Activated CD4-positive, alpha-beta memory T cell treated with anti-CD3 and anti-CD28 coated beads, Interleukin-2, amount 10 ng/mL, durations not matched to agents 7 days and 5 days (primary cell): ENCODE measurements at regions of chr13 and their contacts with region 1.

Region 1: DNA sequence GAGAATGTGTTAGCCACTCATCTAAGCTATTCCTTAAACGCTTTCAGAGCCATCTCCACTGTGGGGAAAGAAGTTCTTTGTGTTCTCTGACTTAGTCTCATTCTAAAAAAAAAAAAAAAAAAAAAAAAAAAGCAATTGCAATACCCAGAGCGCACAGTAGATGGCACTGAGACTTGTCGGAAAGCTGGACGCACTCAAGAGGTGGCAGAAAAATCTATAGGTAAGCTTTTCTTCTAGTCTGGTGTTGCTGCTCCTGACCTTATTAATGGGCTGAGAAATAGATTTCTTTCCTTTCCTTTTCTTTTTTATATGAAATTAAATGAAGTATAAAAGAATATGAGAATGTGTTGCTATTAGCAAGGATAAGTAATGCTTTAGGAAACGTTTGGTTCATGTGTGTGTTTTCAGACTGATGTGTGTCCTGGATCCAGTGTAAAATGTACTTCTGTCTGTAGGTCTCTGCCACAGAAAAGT is 4.7 kb upstream of the GJB2 start:
- DNase-seq: no peak
- H3K4me3 Mint-ChIP-seq: no peak overlapping the region
- H3K27ac Mint-ChIP-seq: no peak overlapping the region
- H3K4me1 Mint-ChIP-seq: peaks cover 22% of the 10 kb centered on the region
- H3K27me3 Mint-ChIP-seq: peaks cover 49% of the 10 kb centered on the region

Region 2: GRCh38 chr13:20043207-20043925 is 154.0 kb before region 1 on chr13:
- CTCF ChIA-PET with region 1: no interaction called
- POLR2A ChIA-PET with region 1: no interaction called
- DNase-seq: no peak
- H3K4me3 Mint-ChIP-seq: no peak overlapping the region
- H3K27ac Mint-ChIP-seq: no peak overlapping the region
- H3K4me1 Mint-ChIP-seq: peaks cover under 1% of the 10 kb centered on the region
- H3K27me3 Mint-ChIP-seq: no peaks in the 10 kb centered on the region

Region 3: GRCh38 chr13:20127577-20128466 is 69.6 kb before region 1 on chr13:
- CTCF ChIA-PET with region 1: interaction called, 10 read pairs
- POLR2A ChIA-PET with region 1: no interaction called
- DNase-seq: peak; percentile 57
- H3K4me3 Mint-ChIP-seq: peak overlapping the region; percentile 63
- H3K27ac Mint-ChIP-seq: no peak overlapping the region
- H3K4me1 Mint-ChIP-seq: peaks cover 8% of the 10 kb centered on the region
- H3K27me3 Mint-ChIP-seq: peaks cover 43% of the 10 kb centered on the region

Region 4: DNA sequence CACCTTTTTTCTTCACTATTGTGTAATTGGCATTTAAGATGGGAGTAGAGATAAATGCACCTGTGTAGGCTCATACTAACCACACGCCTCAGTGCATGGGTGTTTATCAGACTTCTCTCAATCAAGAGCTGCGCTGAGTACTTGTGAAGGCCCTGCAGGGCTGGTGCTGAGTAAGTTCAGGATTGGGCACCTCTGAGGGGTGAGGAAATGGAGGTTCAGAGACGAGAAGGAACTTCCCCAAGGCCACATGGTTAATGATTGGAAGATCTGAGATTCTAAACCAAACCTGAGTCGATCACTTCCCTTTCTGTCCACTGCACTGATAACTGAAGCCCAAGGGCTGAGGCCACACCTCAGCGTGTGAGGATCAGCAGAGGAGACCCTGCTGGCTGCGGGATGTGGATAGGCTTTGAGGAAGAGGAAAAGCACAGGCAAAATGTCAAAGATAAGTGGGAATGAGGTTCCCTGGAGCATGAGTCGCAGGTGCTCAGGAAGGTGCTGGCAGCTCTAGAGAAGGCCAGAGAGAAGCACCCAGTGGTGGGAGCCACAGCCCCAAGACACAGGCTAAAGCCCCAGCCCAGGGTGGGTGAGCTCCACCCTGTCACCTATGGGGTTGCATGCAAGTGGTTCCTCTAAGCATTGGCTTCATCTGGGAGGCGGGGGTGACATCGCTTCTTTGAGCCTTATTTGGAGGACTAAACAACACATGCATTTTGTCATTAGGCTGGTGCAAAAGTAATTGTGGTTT is 67.0 kb after region 1 on chr13:
- CTCF ChIA-PET with region 1: no interaction called
- POLR2A ChIA-PET with region 1: no interaction called
- DNase-seq: no peak
- H3K4me3 Mint-ChIP-seq: no peak overlapping the region
- H3K27ac Mint-ChIP-seq: no peak overlapping the region
- H3K4me1 Mint-ChIP-seq: peaks cover 10% of the 10 kb centered on the region
- H3K27me3 Mint-ChIP-seq: peaks cover 4% of the 10 kb centered on the region

Region 5: DNA sequence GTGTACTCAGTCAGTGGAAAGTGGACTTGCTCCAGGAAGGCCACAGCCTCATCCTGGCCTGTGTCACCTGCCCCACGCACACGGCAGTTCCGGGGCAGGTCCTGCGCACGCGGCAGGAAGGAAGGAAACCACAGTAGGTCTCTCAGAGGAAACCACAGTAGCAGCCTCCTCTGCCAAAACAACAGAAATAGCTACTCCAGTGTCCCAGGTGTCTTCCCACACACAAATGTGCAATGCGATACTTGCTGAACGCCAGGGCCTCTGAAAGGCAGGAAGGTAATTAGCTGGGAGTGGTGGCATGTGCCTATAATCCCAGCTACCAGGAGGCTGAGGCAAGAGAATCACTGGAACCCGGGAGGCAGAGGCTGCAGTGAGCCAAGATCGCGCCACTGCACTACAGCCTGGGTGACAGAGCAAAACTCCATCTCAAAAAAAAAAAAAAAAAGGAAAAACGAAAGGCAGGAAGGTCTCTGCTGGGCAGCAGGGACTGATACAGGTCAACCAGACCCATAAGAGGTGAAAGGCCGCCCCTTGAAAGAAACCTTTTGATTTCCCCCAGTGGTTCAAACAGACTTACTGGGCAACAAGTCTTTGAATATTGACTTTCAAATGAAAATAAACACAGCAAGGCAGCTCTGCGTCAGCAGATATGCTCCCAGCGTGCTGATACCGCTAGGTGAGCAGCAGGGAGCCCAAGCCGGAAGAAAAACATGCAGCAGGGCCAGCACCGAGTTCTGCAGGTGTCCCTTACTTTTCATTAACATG is 278.7 kb after region 1 on chr13:
- CTCF ChIA-PET with region 1: interaction called, 16 read pairs
- POLR2A ChIA-PET with region 1: interaction called, 3 read pairs
- DNase-seq: peak; percentile 83
- H3K4me3 Mint-ChIP-seq: peak overlapping the region; percentile 69
- H3K27ac Mint-ChIP-seq: peak overlapping the region; percentile 97
- H3K4me1 Mint-ChIP-seq: peaks cover 36% of the 10 kb centered on the region
- H3K27me3 Mint-ChIP-seq: no peaks in the 10 kb centered on the region

Region 6: DNA sequence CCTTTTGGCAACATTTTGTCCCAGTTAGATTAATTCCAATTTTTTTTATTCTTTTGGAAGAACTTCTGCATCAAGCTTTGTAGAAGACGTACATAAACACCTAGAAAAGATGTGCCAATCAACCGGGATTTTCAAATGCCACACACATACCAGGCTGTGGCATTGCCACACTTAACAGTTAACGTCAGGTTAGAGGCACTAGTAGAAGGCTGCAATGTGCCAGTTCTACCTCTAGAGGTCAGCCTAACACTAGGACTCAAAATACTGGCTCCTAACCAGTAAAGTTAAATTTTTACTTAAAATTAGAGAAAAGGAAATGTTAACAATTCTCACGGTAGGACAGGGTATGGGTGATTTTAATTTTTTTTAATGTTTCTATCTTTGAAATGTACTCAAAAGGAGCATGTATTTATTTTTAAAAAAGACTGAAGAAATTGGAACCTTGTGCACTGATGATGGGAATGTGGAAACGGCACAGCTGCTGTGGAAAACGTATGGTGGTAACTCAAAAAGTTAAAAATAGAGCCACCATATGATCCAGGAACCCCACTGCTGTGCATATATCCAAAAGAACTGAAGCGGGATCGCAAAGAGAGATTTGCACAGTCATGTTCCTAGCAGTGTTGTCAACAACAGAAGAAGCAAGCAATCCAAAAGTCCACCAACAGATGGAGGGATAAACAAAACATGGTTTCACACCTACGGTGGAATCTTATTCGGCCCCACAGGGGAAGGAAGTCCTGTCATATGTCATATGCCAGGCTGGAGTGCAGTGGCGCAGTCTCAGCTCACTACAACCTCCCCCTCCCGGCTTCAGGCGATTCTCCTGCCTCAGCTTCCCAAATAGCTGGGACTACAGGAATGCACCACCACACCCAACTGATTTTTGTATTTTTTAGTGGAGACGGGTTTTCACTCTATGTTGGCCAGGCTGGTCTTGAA is 298.0 kb after region 1 on chr13:
- CTCF ChIA-PET with region 1: interaction called, 10 read pairs
- POLR2A ChIA-PET with region 1: interaction called, 4 read pairs
- DNase-seq: peak; percentile 70
- H3K4me3 Mint-ChIP-seq: no peak overlapping the region
- H3K27ac Mint-ChIP-seq: no peak overlapping the region
- H3K4me1 Mint-ChIP-seq: peaks cover 7% of the 10 kb centered on the region
- H3K27me3 Mint-ChIP-seq: no peaks in the 10 kb centered on the region